Activated CD8-positive, alpha-beta T cell treated with anti-CD3 and anti-CD28 coated beads for 36 hours (primary cell): ENCODE measurements at regions of chr5 and their contacts with region 1.

Region 1: DNA sequence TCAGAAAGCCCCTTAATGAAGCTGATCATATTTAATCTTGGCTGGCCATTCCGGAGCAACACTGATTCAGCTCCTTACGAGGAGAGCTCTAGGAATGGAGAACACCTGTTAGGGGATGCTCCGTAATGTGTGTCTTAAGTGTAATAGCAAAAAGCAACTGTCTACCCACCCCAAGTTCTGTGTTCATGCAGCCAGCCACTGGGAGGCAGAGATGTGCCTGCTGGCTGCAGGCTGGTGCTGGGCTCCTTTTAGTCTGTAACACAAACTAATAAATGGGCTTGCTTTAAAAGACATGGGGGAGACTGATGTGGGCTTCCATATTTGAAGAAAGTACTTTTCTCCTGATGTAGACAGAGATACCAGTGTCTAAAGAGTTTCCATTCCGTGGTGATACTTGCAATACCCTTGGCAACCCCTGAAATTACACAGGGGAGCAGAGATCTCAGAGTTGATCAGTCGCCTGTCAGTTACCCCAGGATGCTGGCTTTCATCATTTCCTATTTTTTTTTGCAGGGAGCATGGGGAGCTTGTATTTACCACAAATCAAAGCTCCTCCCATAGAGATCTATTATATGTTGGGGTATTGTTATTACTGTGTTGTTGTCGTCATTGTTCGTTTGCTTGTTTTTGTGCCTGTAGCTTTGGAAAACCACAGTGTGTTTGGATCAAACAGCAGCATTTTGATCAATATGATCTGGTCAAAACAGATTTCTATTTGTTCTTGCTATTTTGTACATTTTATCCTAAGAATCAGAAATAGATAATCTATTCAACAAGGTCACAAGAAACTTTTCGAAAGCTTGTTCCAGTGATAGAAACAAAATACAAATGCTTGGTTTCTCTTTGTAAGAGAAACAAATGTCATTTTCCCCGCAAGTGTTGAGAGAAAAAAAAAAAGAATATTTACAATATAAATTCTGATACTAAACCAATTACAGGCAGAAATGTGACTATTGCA is 65.8 kb downstream of the MTX3 start:
- DNase-seq: peak; percentile 51
- ATAC-seq: peak; percentile 61
- H3K4me3 Mint-ChIP-seq: no peak overlapping the region
- H3K27ac Mint-ChIP-seq: no peak overlapping the region
- H3K4me1 Mint-ChIP-seq: no peaks in the 10 kb centered on the region
- H3K27me3 Mint-ChIP-seq: no peaks in the 10 kb centered on the region
- CTCF ChIP-seq: peak; percentile 29

Region 2: GRCh38 chr5:79901631-79902030 is 23.6 kb before region 1 on chr5:
- CTCF ChIA-PET with region 1: no interaction called
- POLR2A ChIA-PET with region 1: no interaction called
- intact Hi-C with region 1: no loop called
- DNase-seq: no peak
- ATAC-seq: no peak
- H3K4me3 Mint-ChIP-seq: no peak overlapping the region
- H3K27ac Mint-ChIP-seq: no peak overlapping the region
- H3K4me1 Mint-ChIP-seq: no peaks in the 10 kb centered on the region
- H3K27me3 Mint-ChIP-seq: peaks cover 16% of the 10 kb centered on the region
- CTCF ChIP-seq: no peak

Region 3: DNA sequence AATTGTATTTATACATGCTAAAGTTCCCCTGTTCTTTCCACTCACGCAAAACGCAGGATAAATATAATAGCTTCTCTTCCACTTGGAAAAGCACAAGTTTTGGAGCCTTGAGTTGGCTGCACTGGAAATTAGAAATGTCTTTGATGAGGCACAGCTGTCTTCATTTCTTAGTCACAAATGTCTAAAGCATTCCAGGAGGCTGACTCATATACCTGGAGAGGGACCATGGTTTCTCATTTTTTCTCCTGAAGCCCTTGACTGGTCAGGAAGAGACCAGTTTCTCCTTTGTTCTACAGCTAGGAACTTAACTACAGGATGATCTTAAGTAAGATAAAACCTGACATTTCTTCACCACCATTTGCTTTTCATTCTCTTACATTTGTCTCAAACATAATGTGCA is 49.7 kb after region 1 on chr5:
- CTCF ChIA-PET with region 1: interaction called, 4 read pairs
- POLR2A ChIA-PET with region 1: no interaction called
- intact Hi-C with region 1: loop called (anchors 5 kb)
- DNase-seq: no peak
- ATAC-seq: no peak
- H3K4me3 Mint-ChIP-seq: no peak overlapping the region
- H3K27ac Mint-ChIP-seq: no peak overlapping the region
- H3K4me1 Mint-ChIP-seq: peaks cover 2% of the 10 kb centered on the region
- H3K27me3 Mint-ChIP-seq: peaks cover 3% of the 10 kb centered on the region
- CTCF ChIP-seq: no peak